Activated CD4-positive, alpha-beta T cell treated with anti-CD3 and anti-CD28 coated beads for 36 hours (primary cell): ENCODE measurements at regions of chr12 and their contacts with region 1.

Region 1: DNA sequence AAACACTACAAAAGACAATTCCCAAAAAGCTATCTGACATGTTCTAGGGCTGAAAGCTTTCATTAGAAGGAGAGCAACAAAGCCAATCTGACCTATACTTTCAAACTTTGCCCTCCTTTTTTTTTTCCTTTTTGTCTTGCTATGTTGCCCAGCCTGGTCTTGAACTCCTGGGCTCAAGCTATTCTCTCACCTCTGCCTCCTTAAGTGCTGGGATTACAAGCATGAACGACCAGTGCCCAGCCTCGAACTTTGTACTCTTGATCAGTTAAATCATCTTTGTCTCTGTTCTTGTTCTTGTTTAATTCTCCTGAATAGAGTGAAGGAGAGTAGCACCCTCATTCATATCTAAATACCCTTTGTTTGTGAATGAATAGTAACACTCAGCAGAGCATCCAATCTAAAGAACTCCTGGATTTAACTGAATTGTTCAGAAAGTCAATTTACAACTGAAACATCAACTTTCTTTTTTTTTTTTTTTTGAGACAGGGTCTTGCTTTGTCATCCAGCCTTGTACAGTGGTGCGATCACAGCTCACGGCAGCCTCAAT is 22.1 kb downstream of the ERP29 start:
- DNase-seq: no peak
- ATAC-seq: no peak
- H3K4me3 Mint-ChIP-seq: no peak overlapping the region
- H3K27ac Mint-ChIP-seq: peak overlapping the region; percentile 21
- H3K4me1 Mint-ChIP-seq: peaks cover 4% of the 10 kb centered on the region
- H3K27me3 Mint-ChIP-seq: no peaks in the 10 kb centered on the region

Region 2: DNA sequence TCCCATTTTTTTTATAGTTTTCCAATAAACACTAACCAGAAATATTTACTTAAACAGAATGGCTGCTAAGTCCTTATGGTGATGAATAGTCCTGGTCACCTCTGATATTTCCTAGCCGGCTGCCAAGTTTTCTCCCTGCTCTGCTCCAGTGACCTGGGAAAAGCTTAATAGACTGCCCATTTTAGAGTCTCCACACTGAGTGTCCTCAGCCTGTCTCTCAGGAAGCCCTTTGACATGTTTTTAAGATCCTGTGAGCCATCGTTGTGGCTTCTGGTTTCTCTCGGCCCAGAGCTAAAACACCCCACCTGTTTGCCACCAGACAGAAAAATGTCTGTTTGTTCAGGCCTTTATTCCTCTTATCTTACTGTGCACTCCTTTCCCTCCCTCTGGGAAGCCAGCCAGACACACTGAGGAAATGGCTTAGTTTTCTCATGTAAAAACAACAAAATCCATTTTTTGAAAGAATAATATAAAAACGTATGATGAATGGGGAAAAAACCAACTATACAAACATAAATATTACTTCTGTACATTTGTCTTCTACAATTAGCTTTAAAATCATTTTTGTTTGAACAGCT is 294.0 kb before region 1 on chr12:
- CTCF ChIA-PET with region 1: no interaction called
- POLR2A ChIA-PET with region 1: no interaction called
- intact Hi-C with region 1: no loop called
- DNase-seq: no peak
- ATAC-seq: no peak
- H3K4me3 Mint-ChIP-seq: no peak overlapping the region
- H3K27ac Mint-ChIP-seq: no peak overlapping the region
- H3K4me1 Mint-ChIP-seq: no peaks in the 10 kb centered on the region
- H3K27me3 Mint-ChIP-seq: no peaks in the 10 kb centered on the region

Region 3: GRCh38 chr12:112066566-112066965 is 31.3 kb after region 1 on chr12:
- CTCF ChIA-PET with region 1: interaction called, 3 read pairs
- POLR2A ChIA-PET with region 1: no interaction called
- intact Hi-C with region 1: loop called in 1 of 2 experiments (anchors 2 kb)
- DNase-seq: no peak
- ATAC-seq: no peak
- H3K4me3 Mint-ChIP-seq: no peak overlapping the region
- H3K27ac Mint-ChIP-seq: peak overlapping the region; percentile 3
- H3K4me1 Mint-ChIP-seq: no peaks in the 10 kb centered on the region
- H3K27me3 Mint-ChIP-seq: no peaks in the 10 kb centered on the region

Region 4: GRCh38 chr12:112087055-112087850 is 52.0 kb after region 1 on chr12:
- CTCF ChIA-PET with region 1: no interaction called
- POLR2A ChIA-PET with region 1: no interaction called
- intact Hi-C with region 1: no loop called
- DNase-seq: no peak
- ATAC-seq: no peak
- H3K4me3 Mint-ChIP-seq: no peak overlapping the region
- H3K27ac Mint-ChIP-seq: peak overlapping the region; percentile 67
- H3K4me1 Mint-ChIP-seq: peaks cover 25% of the 10 kb centered on the region
- H3K27me3 Mint-ChIP-seq: no peaks in the 10 kb centered on the region

Region 5: GRCh38 chr12:112341046-112341825 is 305.9 kb after region 1 on chr12:
- CTCF ChIA-PET with region 1: no interaction called
- POLR2A ChIA-PET with region 1: no interaction called
- intact Hi-C with region 1: no loop called
- DNase-seq: no peak
- ATAC-seq: no peak
- H3K4me3 Mint-ChIP-seq: no peak overlapping the region
- H3K27ac Mint-ChIP-seq: no peak overlapping the region
- H3K4me1 Mint-ChIP-seq: peaks cover 12% of the 10 kb centered on the region
- H3K27me3 Mint-ChIP-seq: no peaks in the 10 kb centered on the region